PC-9 (cell line): ENCODE measurements at regions of chr16 and their contacts with region 1.

Region 1: DNA sequence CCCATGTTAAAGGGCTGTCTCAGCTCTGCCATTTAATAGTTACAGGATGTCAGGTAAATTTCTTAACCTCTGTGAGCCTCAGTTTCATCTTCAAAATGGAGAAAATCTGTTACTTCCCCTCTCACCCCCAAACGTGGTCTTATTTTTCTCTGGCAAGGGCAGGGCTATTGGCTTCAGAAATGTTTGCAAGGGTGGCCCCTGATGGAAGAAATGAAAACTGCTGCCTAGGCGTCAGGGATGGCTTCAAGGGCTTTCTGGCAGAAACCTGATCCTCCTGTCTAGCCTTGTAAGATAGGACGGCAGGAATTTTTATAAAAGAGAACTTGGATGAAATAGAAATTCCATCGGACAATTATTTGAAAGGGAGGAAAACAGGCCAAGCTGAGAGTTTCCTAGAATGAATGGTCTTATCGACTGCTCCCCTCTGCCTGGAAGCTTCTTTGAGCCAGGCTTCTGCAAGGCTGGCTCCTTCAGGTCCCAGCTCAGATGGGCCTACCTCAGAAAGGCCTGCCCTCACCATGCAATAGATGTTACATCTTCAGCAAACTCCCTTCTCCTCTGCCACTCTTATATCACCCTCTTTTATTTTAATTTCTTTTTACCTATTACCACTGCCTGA is 43.0 kb upstream of the TANGO6 start:
- DNase-seq: peak; percentile 80 to 83
- H3K4me3 ChIP-seq: no peak overlapping the region
- H3K27ac ChIP-seq: 0 out of 2 replicates have a peak overlapping the region, but pooled peaks have one; percentile 28
- H3K4me1 ChIP-seq: peaks cover 42% of the 10 kb centered on the region
- H3K27me3 ChIP-seq: no peaks in the 10 kb centered on the region
- CTCF ChIP-seq: peak; percentile 81

Region 2: DNA sequence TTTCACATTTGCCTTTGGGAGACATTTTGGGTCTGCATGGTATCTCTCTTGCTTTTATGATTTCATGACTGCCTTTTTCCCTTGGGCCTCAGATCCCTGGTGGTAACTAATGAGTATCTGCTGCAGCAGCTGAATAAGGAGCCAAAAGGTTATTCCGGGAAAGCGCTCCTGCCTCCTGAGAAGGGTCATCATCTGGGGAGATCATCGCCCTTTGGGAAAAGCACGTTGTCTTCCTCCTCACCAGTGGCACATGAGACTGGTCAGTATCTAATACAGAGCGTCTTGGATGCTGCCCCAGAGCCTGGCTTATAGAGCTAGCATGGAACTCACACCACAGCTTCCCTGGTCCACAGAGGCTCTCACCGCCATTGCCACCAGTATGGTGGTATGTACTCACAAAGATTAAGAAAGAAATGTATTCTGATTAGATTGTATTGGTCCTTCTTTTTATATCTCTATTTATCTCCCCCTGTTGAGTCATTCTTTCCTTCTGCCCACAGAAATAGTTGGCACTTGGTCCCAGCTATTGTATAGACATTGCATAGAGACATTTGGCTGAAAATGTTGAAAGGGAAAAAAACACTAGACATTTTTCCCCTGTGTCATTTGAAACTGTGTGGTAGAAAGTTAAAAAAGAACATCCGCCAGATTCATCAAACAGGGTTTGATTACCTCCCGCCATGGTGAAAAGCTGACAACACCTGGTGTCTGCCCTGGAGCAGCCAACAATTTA is 1415.4 kb before region 1 on chr16:
- CTCF ChIA-PET with region 1: no interaction called
- POLR2A ChIA-PET with region 1: interaction called, 16 read pairs
- intact Hi-C with region 1: no loop called
- DNase-seq: no peak
- H3K4me3 ChIP-seq: no peak overlapping the region
- H3K27ac ChIP-seq: no peak overlapping the region
- H3K4me1 ChIP-seq: no peaks in the 10 kb centered on the region
- H3K27me3 ChIP-seq: no peaks in the 10 kb centered on the region
- CTCF ChIP-seq: no peak

Region 3: DNA sequence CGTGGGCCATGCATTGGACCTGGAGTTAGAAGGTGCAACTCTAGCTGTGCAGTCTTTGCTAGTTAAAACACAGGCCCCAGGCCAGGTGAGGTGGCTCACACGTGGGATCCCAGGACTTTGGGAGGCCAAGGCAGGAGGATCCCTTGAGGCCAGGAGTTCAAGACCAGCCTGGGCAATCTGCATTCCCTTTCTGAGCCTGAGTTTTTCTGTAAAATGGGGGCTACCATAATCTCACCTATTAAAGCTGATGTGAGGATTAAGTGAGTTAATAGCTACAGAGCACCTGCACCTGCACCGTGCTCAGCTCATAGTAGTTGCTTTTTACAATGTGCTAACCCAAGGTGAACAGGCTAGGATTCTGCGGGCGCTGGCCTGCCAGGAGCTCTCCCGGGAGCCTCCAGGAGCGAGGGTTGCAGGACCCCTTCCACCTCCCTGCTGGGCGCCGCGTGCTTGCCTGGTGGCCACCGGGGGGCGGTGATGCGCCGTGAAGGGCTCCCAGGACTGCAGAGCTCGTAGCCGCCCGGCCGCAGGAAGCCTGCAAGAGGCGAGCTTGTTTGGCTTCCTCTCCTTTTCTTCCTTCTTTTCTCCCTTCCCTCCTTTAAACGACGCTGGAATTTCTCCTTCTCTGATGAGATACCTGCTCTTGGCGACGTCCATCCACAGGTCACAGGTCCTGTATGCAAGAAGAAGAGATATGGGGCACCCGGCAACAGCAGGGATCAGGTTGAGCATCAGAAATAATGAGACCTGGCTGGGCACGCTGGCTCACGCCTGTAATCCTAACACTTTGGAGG is 210.0 kb before region 1 on chr16:
- CTCF ChIA-PET with region 1: no interaction called
- POLR2A ChIA-PET with region 1: no interaction called
- intact Hi-C with region 1: loop called (anchors 5 kb)
- DNase-seq: peak; percentile 46 to 79
- H3K4me3 ChIP-seq: no peak overlapping the region
- H3K27ac ChIP-seq: no peak overlapping the region
- H3K4me1 ChIP-seq: no peaks in the 10 kb centered on the region
- H3K27me3 ChIP-seq: no peaks in the 10 kb centered on the region
- CTCF ChIP-seq: peak; percentile 92

Region 4: GRCh38 chr16:68744369-68745280 is 55.7 kb before region 1 on chr16:
- CTCF ChIA-PET with region 1: no interaction called
- POLR2A ChIA-PET with region 1: no interaction called
- intact Hi-C with region 1: loop called (anchors 2 kb)
- DNase-seq: peak; percentile 82 to 98
- H3K4me3 ChIP-seq: peak overlapping the region; percentile 49; the same call in 1 of the 2 replicates
- H3K27ac ChIP-seq: peak overlapping the region; percentile 95
- H3K4me1 ChIP-seq: peaks cover 92% of the 10 kb centered on the region
- H3K27me3 ChIP-seq: no peaks in the 10 kb centered on the region
- CTCF ChIP-seq: no peak

Region 5: GRCh38 chr16:68782198-68782597 is 18.2 kb before region 1 on chr16:
- CTCF ChIA-PET with region 1: interaction called, 4 read pairs
- POLR2A ChIA-PET with region 1: interaction called, 3 read pairs
- intact Hi-C with region 1: loop called (anchors 1 kb)
- DNase-seq: no peak
- H3K4me3 ChIP-seq: no peak overlapping the region
- H3K27ac ChIP-seq: no peak overlapping the region
- H3K4me1 ChIP-seq: peaks cover 28% of the 10 kb centered on the region
- H3K27me3 ChIP-seq: no peaks in the 10 kb centered on the region
- CTCF ChIP-seq: no peak